ENCODE measurements at regions of chr12 and their contacts with region 1.

Region 1: DNA sequence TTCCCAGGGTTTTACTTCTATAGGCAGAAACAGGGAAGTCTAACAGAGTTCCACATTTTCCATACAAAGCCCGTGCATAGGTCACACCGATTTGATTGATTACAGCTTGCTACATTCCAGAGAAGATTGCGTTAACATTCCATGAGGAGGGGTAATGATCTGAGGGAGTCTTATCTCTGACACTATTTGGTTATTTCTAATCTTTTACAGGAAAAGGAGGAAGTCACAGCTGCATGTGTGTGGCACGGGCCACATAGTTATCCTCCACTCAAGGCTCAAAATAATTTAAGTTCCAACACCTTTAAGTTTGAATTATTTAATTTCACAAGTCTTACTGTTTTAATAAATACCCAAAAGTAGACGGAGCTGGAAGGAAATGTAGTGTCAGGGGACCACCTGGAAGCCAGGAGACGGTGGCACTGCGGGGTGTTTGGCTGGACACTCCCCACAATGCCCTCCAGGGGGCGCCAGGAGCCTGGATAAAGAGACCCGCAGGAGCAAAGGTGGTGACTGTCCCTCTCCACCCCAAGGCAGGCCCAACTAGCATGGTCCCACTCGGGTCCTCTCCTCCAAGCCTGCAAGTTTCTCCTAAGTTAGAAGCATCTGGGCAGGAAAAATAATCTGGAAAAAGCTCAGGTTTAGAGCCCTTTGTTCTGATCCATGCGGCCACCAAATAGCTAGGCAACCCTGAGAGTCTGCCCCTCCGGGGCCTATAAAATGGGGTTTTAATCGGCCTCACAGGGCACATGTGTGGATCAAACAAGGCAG is 20.2 kb downstream of the KRT8 start:
- DNase-seq: peak; percentile 60
- H3K4me3 ChIP-seq: no peak overlapping the region
- H3K27ac ChIP-seq: no peak overlapping the region
- H3K4me1 ChIP-seq: no peaks in the 10 kb centered on the region
- H3K27me3 ChIP-seq: no peaks in the 10 kb centered on the region
- CTCF ChIP-seq: peak; percentile 89 to 92
- POLR2A ChIP-seq: no peak

Region 2: DNA sequence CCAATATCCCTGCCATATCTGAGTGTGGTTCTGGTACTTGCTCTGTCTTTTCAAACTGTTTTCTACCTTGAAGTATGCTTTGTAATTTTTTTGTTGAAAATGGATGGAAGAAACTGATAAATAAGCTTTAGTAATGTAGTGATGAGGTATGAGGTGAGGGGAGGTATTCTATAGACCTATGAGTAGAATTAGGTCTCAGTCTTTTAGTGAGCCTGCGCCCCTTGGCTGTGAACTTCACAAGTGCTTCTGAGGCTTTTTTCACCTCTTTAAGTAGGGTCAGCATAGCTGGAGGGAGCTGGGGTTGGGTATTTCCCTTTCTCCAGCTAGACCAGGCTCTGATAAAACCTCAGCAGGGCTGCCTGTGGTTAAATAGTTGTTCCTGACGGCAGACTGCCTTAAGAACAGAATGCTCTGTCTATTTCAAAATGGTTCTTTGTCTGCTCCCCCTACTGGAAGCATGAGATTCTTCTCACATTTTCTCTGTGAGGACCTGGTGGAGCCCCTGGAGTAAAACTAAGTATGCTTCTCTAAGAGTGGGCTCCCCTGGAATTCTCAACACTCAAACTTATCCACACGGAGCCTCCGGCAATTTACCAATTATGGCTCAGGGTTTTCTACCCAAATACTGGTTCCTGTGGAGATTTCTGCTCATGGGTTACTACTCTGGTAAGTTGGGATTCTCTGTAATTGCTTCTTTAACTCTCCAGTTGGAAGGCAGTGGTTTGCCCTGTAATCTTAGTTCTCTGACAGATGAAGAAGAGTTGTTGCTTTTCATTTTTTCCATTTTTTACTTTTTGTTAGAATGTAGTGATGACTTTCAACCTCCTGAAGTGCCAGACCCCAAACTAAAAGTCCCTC is 377.6 kb before region 1 on chr12:
- CTCF ChIA-PET with region 1: no interaction called
- POLR2A ChIA-PET with region 1: no interaction called
- dilution Hi-C with region 1: no loop called
- intact Hi-C with region 1: no loop called
- DNase-seq: peak; percentile 24
- H3K4me3 ChIP-seq: no peak overlapping the region
- H3K27ac ChIP-seq: no peak overlapping the region
- H3K4me1 ChIP-seq: no peaks in the 10 kb centered on the region
- H3K27me3 ChIP-seq: peaks cover 3 to 29% of the 10 kb centered on the region in 2 experiments
- CTCF ChIP-seq: peak; percentile 35 to 49
- POLR2A ChIP-seq: no peak

Region 3: DNA sequence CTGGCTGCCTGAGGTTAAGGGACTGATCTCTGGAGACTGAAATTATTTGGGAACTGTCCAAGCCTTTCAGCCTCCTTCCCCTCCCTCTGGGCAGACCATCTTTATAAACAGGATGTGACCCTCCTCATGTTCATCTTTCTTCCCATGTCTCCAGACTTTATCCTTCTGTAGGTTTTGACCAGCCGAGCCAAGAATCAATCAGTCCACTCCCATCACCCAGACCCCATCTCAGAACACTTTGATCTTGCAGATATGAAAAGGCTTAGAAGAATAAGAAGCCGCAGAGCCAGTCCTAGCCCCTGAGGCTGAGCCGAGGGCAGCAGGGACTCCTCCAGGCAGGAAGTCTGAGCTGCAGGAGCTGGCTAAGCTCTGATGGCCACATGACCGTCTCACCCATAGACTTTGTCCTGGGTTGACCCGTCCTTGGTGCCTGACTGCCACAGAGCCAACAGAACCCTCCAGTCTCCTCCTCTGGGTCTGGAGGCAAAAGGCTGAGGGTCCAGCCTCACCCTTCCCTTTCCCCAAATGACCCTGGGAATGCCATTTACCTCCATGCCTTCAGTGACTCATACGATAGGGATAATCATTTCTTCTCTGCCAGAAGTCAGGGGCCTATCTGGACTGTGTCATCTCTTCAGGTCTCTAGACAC is 333.4 kb before region 1 on chr12:
- CTCF ChIA-PET with region 1: no interaction called
- POLR2A ChIA-PET with region 1: no interaction called
- dilution Hi-C with region 1: no loop called
- intact Hi-C with region 1: no loop called
- DNase-seq: no peak
- H3K4me3 ChIP-seq: no peak overlapping the region
- H3K27ac ChIP-seq: no peak overlapping the region
- H3K4me1 ChIP-seq: no peaks in the 10 kb centered on the region
- H3K27me3 ChIP-seq: peaks cover 0 to 5% of the 10 kb centered on the region in 2 experiments
- CTCF ChIP-seq: no peak
- POLR2A ChIP-seq: no peak

Region 4: GRCh38 chr12:52870351-52871290 is 14.1 kb before region 1 on chr12:
- CTCF ChIA-PET with region 1: interaction called, 50 read pairs
- POLR2A ChIA-PET with region 1: interaction called, 4 read pairs
- dilution Hi-C with region 1: no loop called
- intact Hi-C with region 1: no loop called
- DNase-seq: peak; percentile 32
- H3K4me3 ChIP-seq: no peak overlapping the region
- H3K27ac ChIP-seq: no peak overlapping the region
- H3K4me1 ChIP-seq: peaks cover 12% of the 10 kb centered on the region
- H3K27me3 ChIP-seq: no peaks in the 10 kb centered on the region
- CTCF ChIP-seq: peak; percentile 79 to 82
- POLR2A ChIP-seq: no peak

Region 5: GRCh38 chr12:52903285-52903854 is 18.7 kb after region 1 on chr12:
- CTCF ChIA-PET with region 1: interaction called, 72 read pairs
- POLR2A ChIA-PET with region 1: no interaction called
- dilution Hi-C with region 1: no loop called
- intact Hi-C with region 1: no loop called
- DNase-seq: peak; percentile 75
- H3K4me3 ChIP-seq: peak overlapping the region in 2 of 3 experiments; percentile 13 to 44
- H3K27ac ChIP-seq: peak overlapping the region; percentile 69
- H3K4me1 ChIP-seq: peaks cover 10% of the 10 kb centered on the region
- H3K27me3 ChIP-seq: no peaks in the 10 kb centered on the region
- CTCF ChIP-seq: no peak
- POLR2A ChIP-seq: no peak

Region 6: GRCh38 chr12:52942066-52942900 is 57.6 kb after region 1 on chr12:
- CTCF ChIA-PET with region 1: interaction called, 28 read pairs
- POLR2A ChIA-PET with region 1: interaction called, 3 read pairs
- dilution Hi-C with region 1: no loop called
- intact Hi-C with region 1: no loop called
- DNase-seq: no peak
- H3K4me3 ChIP-seq: no peak overlapping the region
- H3K27ac ChIP-seq: no peak overlapping the region
- H3K4me1 ChIP-seq: peaks cover 23% of the 10 kb centered on the region
- H3K27me3 ChIP-seq: no peaks in the 10 kb centered on the region
- CTCF ChIP-seq: no peak
- POLR2A ChIP-seq: no peak

Region 7: GRCh38 chr12:52956987-52957386 is 72.3 kb after region 1 on chr12:
- CTCF ChIA-PET with region 1: interaction called, 76 read pairs
- POLR2A ChIA-PET with region 1: no interaction called
- dilution Hi-C with region 1: no loop called
- intact Hi-C with region 1: no loop called
- DNase-seq: no peak
- H3K4me3 ChIP-seq: no peak overlapping the region
- H3K27ac ChIP-seq: no peak overlapping the region
- H3K4me1 ChIP-seq: no peaks in the 10 kb centered on the region
- H3K27me3 ChIP-seq: no peaks in the 10 kb centered on the region
- CTCF ChIP-seq: no peak
- POLR2A ChIP-seq: no peak

Region 8: GRCh38 chr12:52969828-52970569 is 85.3 kb after region 1 on chr12:
- CTCF ChIA-PET with region 1: interaction called, 25 read pairs
- POLR2A ChIA-PET with region 1: interaction called, 8 read pairs
- dilution Hi-C with region 1: loop called (anchors 25 kb)
- intact Hi-C with region 1: no loop called
- DNase-seq: no peak
- H3K4me3 ChIP-seq: no peak overlapping the region
- H3K27ac ChIP-seq: no peak overlapping the region
- H3K4me1 ChIP-seq: peaks cover under 1% of the 10 kb centered on the region
- H3K27me3 ChIP-seq: no peaks in the 10 kb centered on the region
- CTCF ChIP-seq: no peak
- POLR2A ChIP-seq: no peak

Measured in endothelial cell of umbilical vein (primary cell).